CD8-positive, alpha-beta T cell (primary cell): ENCODE measurements at regions of chr10 and their contacts with region 1.

Region 1: GRCh38 chr10:30722956-30723620 is 93.5 kb upstream of the LYZL2 start:
- DNase-seq: no peak
- ATAC-seq: no peak
- H3K4me3 ChIP-seq: no peak overlapping the region
- H3K4me3 Mint-ChIP-seq: no peak overlapping the region
- H3K27ac ChIP-seq: no peak overlapping the region
- H3K27ac Mint-ChIP-seq: no peak overlapping the region
- H3K4me1 ChIP-seq: peaks cover 3% of the 10 kb centered on the region
- H3K4me1 Mint-ChIP-seq: no peaks in the 10 kb centered on the region
- H3K27me3 ChIP-seq: no peaks in the 10 kb centered on the region
- H3K27me3 Mint-ChIP-seq: no peaks in the 10 kb centered on the region
- CTCF ChIP-seq: no peak

Region 2: GRCh38 chr10:30639946-30640786 is 82.9 kb before region 1 on chr10:
- CTCF ChIA-PET with region 1: interaction called, 4 read pairs
- POLR2A ChIA-PET with region 1: no interaction called
- intact Hi-C with region 1: loop called in 1 of 2 experiments (anchors 2 kb)
- DNase-seq: peak in 4 of 9 experiments; percentile 10 to 72 (median 41)
- ATAC-seq: peak; percentile 40
- H3K4me3 ChIP-seq: no peak overlapping the region
- H3K4me3 Mint-ChIP-seq: no peak overlapping the region
- H3K27ac ChIP-seq: no peak overlapping the region
- H3K27ac Mint-ChIP-seq: no peak overlapping the region
- H3K4me1 ChIP-seq: no peaks in the 10 kb centered on the region
- H3K4me1 Mint-ChIP-seq: no peaks in the 10 kb centered on the region
- H3K27me3 ChIP-seq: no peaks in the 10 kb centered on the region
- H3K27me3 Mint-ChIP-seq: peaks cover 40% of the 10 kb centered on the region
- CTCF ChIP-seq: peak; percentile 92

Region 3: DNA sequence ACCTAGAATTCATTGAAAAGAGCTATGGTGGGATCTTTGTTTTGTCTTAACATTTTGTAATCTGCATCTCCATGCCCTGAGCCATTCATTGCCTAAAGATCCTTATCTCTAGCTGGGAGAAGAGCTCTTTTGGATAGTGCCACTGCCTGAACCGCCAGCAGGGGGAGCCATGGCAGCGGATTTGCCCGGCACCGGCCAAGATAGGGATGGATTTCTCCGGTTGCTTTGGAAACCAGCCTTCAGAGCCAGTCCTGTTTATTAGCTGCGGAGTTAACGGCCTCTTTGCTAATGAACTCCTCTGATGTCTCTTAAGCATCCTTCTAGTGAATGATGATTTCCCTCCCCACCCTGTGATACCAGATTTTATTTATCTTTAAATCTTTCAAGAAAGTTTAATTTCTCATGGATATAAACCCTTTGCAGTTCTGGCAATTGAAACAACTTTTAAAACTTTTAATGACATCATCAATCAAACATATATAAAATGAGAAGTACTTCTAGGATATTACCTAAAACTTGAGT is 35.3 kb before region 1 on chr10:
- CTCF ChIA-PET with region 1: interaction called, 191 read pairs
- POLR2A ChIA-PET with region 1: no interaction called
- intact Hi-C with region 1: loop called (anchors 1 kb)
- DNase-seq: peak; percentile 54 to 90 (median 78)
- ATAC-seq: peak; percentile 77
- H3K4me3 ChIP-seq: no peak overlapping the region
- H3K4me3 Mint-ChIP-seq: no peak overlapping the region
- H3K27ac ChIP-seq: no peak overlapping the region
- H3K27ac Mint-ChIP-seq: no peak overlapping the region
- H3K4me1 ChIP-seq: peaks cover 3% of the 10 kb centered on the region
- H3K4me1 Mint-ChIP-seq: peaks cover 3% of the 10 kb centered on the region
- H3K27me3 ChIP-seq: peaks cover 0 to 5% of the 10 kb centered on the region in 2 experiments
- H3K27me3 Mint-ChIP-seq: peaks cover 23% of the 10 kb centered on the region
- CTCF ChIP-seq: peak; percentile 97

Region 4: GRCh38 chr10:30709229-30709628 is 13.9 kb before region 1 on chr10:
- CTCF ChIA-PET with region 1: interaction called, 17 read pairs
- POLR2A ChIA-PET with region 1: interaction called, 3 read pairs
- intact Hi-C with region 1: no loop called
- DNase-seq: no peak
- ATAC-seq: no peak
- H3K4me3 ChIP-seq: no peak overlapping the region
- H3K4me3 Mint-ChIP-seq: no peak overlapping the region
- H3K27ac ChIP-seq: no peak overlapping the region
- H3K27ac Mint-ChIP-seq: no peak overlapping the region
- H3K4me1 ChIP-seq: peaks cover 20% of the 10 kb centered on the region
- H3K4me1 Mint-ChIP-seq: peaks cover 19% of the 10 kb centered on the region
- H3K27me3 ChIP-seq: no peaks in the 10 kb centered on the region
- H3K27me3 Mint-ChIP-seq: no peaks in the 10 kb centered on the region
- CTCF ChIP-seq: no peak

Region 5: GRCh38 chr10:31808258-31809218 is 1085.5 kb after region 1 on chr10:
- CTCF ChIA-PET with region 1: interaction called, 4 read pairs
- POLR2A ChIA-PET with region 1: no interaction called
- intact Hi-C with region 1: loop called in 1 of 2 experiments (anchors 1 kb)
- DNase-seq: peak in 4 of 9 experiments; percentile 4 to 74 (median 39)
- ATAC-seq: peak; percentile 57
- H3K4me3 ChIP-seq: no peak overlapping the region
- H3K4me3 Mint-ChIP-seq: no peak overlapping the region
- H3K27ac ChIP-seq: no peak overlapping the region
- H3K27ac Mint-ChIP-seq: peak overlapping the region; percentile 83
- H3K4me1 ChIP-seq: no peaks in the 10 kb centered on the region
- H3K4me1 Mint-ChIP-seq: peaks cover 4% of the 10 kb centered on the region
- H3K27me3 ChIP-seq: no peaks in the 10 kb centered on the region
- H3K27me3 Mint-ChIP-seq: no peaks in the 10 kb centered on the region
- CTCF ChIP-seq: peak; percentile 64

Region 6: GRCh38 chr10:32207544-32207943 is 1484.5 kb after region 1 on chr10:
- CTCF ChIA-PET with region 1: interaction called, 3 read pairs
- POLR2A ChIA-PET with region 1: no interaction called
- intact Hi-C with region 1: loop called (anchors 2 to 5 kb)
- DNase-seq: peak; percentile 21 to 66 (median 54)
- ATAC-seq: peak; percentile 65
- H3K4me3 ChIP-seq: no peak overlapping the region
- H3K4me3 Mint-ChIP-seq: no peak overlapping the region
- H3K27ac ChIP-seq: no peak overlapping the region
- H3K27ac Mint-ChIP-seq: no peak overlapping the region
- H3K4me1 ChIP-seq: no peaks in the 10 kb centered on the region
- H3K4me1 Mint-ChIP-seq: no peaks in the 10 kb centered on the region
- H3K27me3 ChIP-seq: no peaks in the 10 kb centered on the region
- H3K27me3 Mint-ChIP-seq: no peaks in the 10 kb centered on the region
- CTCF ChIP-seq: peak; percentile 50